ENCODE measurements at regions of chr14 and their contacts with region 1.

Region 1: DNA sequence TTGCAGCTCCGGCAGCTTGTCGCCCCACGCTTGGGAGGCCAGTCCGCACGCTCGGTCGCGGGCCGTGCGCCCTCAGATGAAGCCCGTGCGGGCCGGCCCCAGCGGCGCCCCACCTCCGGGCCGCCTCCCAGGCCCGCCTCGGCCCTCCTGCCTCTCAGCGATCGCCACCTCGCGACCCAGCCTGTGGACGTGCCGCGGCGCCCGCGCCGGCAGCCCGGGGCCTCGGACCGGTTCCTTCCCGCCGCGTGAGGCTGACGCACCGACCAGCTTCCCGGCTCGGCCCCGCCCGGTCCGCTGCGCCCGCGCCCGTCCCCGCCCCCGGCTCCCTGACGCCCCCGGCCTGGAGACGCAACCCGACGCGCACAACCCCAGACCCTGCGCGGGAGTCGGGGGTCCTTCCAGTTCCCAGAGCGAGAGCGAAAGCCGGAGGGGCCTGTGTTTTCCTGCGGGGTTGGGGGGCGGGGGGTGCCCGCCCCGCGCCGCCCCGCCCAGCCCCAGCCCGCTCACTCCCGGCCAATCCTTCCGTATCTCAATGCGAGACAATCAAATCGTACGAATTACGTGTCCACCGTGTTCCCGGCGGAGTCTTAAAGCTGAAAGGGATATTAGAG is at the start of gene ERO1A:
- DNase-seq: no peak
- ATAC-seq: peak; percentile 82
- H3K4me3 ChIP-seq: peak within 1 kb of the TSS; percentile 85
- H3K27ac ChIP-seq: peak within 1 kb of the TSS; percentile 80
- H3K4me1 ChIP-seq: peaks cover 7% of the 10 kb centered on the region; the same call in 1 of the 2 replicates
- H3K27me3 ChIP-seq: no peaks in the 10 kb centered on the region
- CTCF ChIP-seq: peak in 1 of 3 experiments; percentile 10; a peak in 1 of 6 replicates
- EP300 ChIP-seq: no peak
- POLR2A ChIP-seq: peak; percentile 73; the same call in 1 of the 2 replicates
- RAD21 ChIP-seq: no peak
- polyA plus RNA-seq, gene ERO1A: 17.5 to 41.2 TPM

Region 2: DNA sequence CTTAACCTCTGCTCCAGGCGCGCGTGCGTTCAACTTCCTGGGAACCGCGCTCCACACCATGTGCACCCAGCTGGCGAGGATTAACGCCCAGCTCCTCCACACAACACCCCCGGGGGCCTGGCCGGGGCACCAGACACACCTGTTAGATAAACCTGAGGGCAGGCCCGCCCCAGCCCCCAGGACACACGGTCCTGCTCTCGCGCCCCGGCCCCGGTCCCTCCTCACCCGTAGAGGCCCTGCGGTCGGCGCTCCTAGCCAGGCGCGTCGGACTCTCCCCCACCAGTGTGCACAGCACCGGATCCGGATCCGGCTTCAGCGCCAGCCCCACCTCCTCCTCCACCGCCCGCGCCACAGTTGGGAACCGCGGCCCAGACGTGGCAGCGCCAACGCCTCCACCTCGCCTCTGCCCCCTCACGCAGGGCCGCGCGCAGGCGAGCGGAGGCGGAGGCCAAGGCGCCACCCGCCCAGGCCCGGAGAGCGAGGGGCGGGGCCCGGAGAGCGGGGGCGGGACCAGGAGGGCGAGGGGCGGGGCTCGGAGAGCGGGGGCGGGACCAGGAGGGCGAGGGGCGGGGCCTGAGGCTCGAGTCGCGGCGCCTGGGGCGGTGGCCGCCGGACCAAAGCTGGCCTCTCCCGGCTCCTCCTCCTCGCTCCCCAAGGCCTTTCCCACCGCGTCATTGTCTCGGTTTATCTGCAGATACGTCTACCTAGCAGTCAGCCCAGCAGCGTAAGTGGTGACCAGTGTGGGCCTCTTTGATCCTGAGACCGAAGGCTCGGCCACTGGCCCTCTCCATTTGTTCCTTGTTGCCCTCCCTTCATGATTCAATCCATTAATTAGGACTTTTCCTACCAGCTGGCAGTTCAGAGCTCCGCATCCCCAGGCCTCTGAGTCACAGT is 95.9 kb after region 1 on chr14 and contains the start of gene GNPNAT1:
- CTCF ChIA-PET with region 1: no interaction called
- POLR2A ChIA-PET with region 1: no interaction called
- RAD21 ChIA-PET with region 1: no interaction called
- SMC1A ChIA-PET with region 1: no interaction called
- in situ Hi-C with region 1: no loop called
- intact Hi-C with region 1: loop called (anchors 5 kb)
- DNase-seq: peak; percentile 48
- ATAC-seq: peak; percentile 97
- H3K4me3 ChIP-seq: peak within 1 kb of the TSS; percentile 78
- H3K27ac ChIP-seq: peak within 1 kb of the TSS; percentile 61
- H3K4me1 ChIP-seq: no peaks in the 10 kb centered on the region
- H3K27me3 ChIP-seq: no peaks in the 10 kb centered on the region
- CTCF ChIP-seq: no peak
- EP300 ChIP-seq: no peak
- POLR2A ChIP-seq: peak; percentile 93
- RAD21 ChIP-seq: no peak
- polyA plus RNA-seq, gene GNPNAT1: 23.4 to 29.1 TPM